Gastrocnemius medialis (tissue), 4 donors: ENCODE measurements at regions of chr7 and their contacts with region 1.

Region 1: DNA sequence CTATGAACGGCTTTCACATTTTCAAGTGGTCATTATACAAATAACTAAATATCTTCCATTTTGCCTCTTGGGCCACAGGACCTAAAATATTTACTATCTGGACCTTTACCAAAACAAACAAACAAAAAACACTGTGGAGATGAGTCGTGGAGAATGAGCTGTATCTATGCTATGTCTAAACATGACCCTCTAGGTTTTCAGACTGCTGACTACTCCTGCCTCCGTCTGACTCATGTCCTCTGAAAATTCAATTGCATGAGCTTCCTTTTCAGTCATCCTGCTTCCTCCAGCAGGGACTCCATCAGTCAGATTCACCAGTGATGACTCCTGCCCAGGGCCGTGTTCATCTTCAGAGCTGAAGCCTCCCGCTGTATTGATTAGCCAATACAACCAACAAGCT is 96.8 kb downstream of the COL28A1 start:
- DNase-seq: no peak
- ATAC-seq: no peak
- H3K4me3 ChIP-seq: no peak overlapping the region
- H3K27ac ChIP-seq: no peak overlapping the region
- H3K4me1 ChIP-seq: no peaks in the 10 kb centered on the region
- H3K27me3 ChIP-seq: no peaks in the 10 kb centered on the region
- CTCF ChIP-seq: no peak
- POLR2A ChIP-seq: no peak

Region 2: GRCh38 chr7:6256677-6257535 is 1181.9 kb before region 1 on chr7:
- in situ Hi-C with region 1: no loop called
- intact Hi-C with region 1: no loop called
- DNase-seq: peak; percentile 30 to 60
- ATAC-seq: peak; percentile 36 to 58
- H3K4me3 ChIP-seq: no peak overlapping the region
- H3K27ac ChIP-seq: peak overlapping the region; percentile 50 to 61 (median 56)
- H3K4me1 ChIP-seq: peaks cover 45 to 67% of the 10 kb centered on the region in 2 donors
- H3K27me3 ChIP-seq: no peaks in the 10 kb centered on the region
- CTCF ChIP-seq: no peak
- POLR2A ChIP-seq: no peak

Region 3: DNA sequence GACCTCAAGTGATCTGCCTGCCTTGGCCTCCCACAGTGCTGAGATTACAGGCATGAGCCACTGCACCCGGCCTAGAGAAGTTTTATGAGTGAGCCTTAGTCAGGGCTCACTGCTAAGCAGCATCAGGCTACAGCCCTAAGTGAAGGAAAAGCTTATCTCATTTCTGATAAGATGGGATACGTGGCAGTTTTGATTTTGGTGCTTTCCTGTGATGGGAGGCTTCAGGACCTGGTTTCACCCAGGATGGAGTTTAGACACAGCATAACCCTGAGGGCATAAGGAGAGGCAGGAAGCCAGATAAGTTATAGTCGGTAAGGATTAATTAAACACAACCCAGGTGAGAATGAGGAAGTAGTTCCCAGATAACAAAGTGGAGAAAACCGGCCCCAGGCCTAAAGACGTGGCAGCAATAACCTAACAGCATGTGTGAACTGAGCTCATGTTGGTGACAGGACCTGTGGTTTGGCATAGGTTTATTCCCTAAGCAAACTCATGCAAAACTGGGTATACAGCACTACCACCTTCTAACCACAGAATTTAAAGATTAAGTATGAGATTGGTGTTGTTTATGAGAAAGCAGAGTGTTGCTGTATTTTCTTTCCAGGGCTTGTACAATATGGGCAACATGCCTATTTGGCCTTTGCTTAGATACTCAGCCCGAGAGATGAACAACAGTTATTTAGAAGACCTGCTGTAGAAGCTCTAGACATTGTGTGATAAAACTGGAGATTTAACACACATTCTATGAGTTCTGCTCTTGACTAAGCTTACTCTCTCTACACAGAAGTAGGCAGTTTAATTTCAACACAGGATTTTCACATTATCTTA is 22.6 kb before region 1 on chr7:
- in situ Hi-C with region 1: no loop called
- intact Hi-C with region 1: loop called (anchors 2 kb)
- DNase-seq: no peak
- ATAC-seq: no peak
- H3K4me3 ChIP-seq: no peak overlapping the region
- H3K27ac ChIP-seq: no peak overlapping the region
- H3K4me1 ChIP-seq: no peaks in the 10 kb centered on the region
- H3K27me3 ChIP-seq: no peaks in the 10 kb centered on the region
- CTCF ChIP-seq: no peak
- POLR2A ChIP-seq: no peak

Region 4: GRCh38 chr7:7529328-7529727 is 90.5 kb after region 1 on chr7:
- in situ Hi-C with region 1: loop called in 1 of 4 experiments (anchors 25 kb)
- intact Hi-C with region 1: no loop called
- DNase-seq: no peak
- ATAC-seq: no peak
- H3K4me3 ChIP-seq: no peak overlapping the region
- H3K27ac ChIP-seq: no peak overlapping the region
- H3K4me1 ChIP-seq: no peaks in the 10 kb centered on the region
- H3K27me3 ChIP-seq: no peaks in the 10 kb centered on the region
- CTCF ChIP-seq: no peak
- POLR2A ChIP-seq: no peak